Activated CD4-positive, alpha-beta memory T cell treated with anti-CD3 and anti-CD28 coated beads for 36 hours (primary cell): ENCODE measurements at regions of chr14 and their contacts with region 1.

Region 1: DNA sequence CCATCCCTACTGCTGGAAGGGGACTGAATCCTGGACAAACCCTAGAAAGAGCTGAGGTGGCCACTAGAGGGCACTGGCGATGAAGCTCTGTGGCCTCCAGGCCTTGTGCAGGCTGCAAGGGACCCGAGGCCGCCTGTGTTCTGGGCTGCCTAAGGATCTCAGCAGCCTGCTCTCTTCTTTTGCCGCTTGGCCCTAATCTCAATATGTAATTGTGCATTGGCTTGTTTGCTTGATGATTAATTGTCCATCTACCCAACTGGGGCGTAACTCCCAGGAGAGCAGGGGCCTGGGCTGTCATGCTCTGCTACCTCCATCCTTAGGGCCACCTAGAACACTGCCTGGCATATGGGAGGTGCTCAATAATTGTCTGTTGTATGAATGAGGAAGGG is 73.8 kb downstream of the SYNE3 start:
- DNase-seq: peak; percentile 83
- H3K4me3 Mint-ChIP-seq: no peak overlapping the region
- H3K27ac Mint-ChIP-seq: peak overlapping the region; percentile 35
- H3K4me1 Mint-ChIP-seq: peaks cover 10% of the 10 kb centered on the region
- H3K27me3 Mint-ChIP-seq: no peaks in the 10 kb centered on the region

Region 2: DNA sequence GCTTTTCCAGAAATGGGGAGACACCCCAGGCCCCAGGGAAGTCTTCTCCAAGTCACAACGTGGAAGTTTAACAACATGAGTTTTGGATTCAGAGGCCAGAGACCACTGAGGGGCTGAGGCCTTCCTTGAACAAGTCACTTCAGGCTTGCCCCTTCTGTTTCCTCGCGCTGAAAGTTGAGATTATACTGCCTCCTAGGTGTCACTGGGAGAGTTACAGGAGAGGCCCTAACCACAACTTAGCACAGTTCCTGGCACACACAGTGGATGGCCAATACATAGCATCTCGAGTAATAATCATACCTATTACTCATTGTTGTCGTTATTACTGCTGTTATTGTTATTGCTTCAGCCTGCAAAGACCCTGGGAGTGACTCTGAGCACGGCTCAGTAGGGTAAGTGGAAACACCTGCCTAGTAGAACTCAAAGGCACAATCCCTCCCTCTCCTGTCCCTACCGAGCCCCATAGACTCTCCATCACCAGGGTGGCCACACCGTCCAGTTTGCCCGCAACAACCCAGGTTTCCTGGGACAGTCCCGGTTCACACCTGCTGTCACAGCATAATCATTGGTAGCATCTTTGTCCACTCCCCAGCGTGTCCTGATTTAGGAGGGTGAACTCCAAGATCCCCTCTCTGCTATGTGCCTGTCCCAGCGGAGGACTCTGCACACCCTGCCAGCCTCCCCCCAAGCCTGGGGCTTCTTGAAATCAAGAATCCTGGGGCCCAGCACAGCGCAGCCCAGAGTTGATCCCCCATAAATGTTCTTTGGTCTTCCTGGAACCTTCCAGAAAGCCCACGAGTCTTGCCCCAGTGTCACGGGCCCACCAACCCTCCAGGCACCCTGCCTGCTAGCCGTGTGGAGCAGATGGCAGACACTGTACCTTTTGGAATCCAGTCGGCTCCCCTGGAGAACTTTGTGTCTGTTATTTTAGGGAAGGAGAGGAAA is 11.2 kb before region 1 on chr14:
- CTCF ChIA-PET with region 1: interaction called, 20 read pairs
- POLR2A ChIA-PET with region 1: no interaction called
- intact Hi-C with region 1: no loop called
- DNase-seq: peak; percentile 12
- H3K4me3 Mint-ChIP-seq: no peak overlapping the region
- H3K27ac Mint-ChIP-seq: no peak overlapping the region
- H3K4me1 Mint-ChIP-seq: no peaks in the 10 kb centered on the region
- H3K27me3 Mint-ChIP-seq: no peaks in the 10 kb centered on the region

Region 3: DNA sequence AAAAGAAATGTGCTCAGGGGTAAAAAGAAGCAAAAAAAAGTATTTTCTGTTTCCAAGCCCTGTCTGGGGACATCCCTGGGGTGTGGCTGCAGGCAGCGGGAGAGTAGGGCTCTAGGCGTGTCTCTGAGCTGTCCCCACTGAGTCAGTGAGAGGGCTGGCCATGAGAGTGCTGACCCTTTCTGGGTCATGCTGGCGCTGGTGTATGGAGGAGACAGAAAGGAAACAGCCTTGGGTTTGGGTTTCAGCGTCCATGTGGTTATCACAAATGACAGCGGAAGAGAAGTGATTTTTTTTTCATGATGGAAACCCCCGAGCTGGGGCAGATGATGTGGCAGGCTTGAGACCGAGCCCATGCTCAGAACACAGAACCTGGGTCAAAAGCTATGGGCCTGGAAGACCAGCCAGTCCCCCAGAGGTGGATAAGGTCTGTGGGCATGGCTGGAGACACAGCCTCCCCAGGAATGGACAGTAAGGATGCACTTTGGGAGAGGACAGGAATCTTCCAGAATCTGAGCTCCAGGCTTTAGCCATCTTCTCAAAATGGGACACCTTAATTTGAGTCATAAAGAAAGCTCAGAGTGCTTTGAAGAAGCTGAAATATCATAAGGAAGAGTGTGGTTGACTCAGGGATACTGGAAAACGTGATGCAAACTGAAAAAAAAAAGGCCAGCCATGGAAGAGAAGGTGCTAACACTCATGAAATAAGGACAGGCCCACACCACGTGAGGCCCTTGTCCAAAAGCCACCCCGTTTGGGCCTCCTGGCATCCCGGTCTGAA is 37.7 kb after region 1 on chr14:
- CTCF ChIA-PET with region 1: interaction called, 15 read pairs
- POLR2A ChIA-PET with region 1: interaction called, 3 read pairs
- intact Hi-C with region 1: no loop called
- DNase-seq: peak; percentile 74
- H3K4me3 Mint-ChIP-seq: no peak overlapping the region
- H3K27ac Mint-ChIP-seq: peak overlapping the region; percentile 90
- H3K4me1 Mint-ChIP-seq: peaks cover 44% of the 10 kb centered on the region
- H3K27me3 Mint-ChIP-seq: no peaks in the 10 kb centered on the region

Region 4: GRCh38 chr14:95515596-95516552 is 73.2 kb after region 1 on chr14:
- CTCF ChIA-PET with region 1: interaction called, 17 read pairs
- POLR2A ChIA-PET with region 1: interaction called, 8 read pairs
- intact Hi-C with region 1: no loop called
- DNase-seq: peak; percentile 91
- H3K4me3 Mint-ChIP-seq: peak overlapping the region; percentile 90
- H3K27ac Mint-ChIP-seq: peak overlapping the region; percentile 93
- H3K4me1 Mint-ChIP-seq: peaks cover 71% of the 10 kb centered on the region
- H3K27me3 Mint-ChIP-seq: no peaks in the 10 kb centered on the region

Region 5: GRCh38 chr14:95683793-95684192 is 241.2 kb after region 1 on chr14:
- CTCF ChIA-PET with region 1: interaction called, 3 read pairs
- POLR2A ChIA-PET with region 1: no interaction called
- intact Hi-C with region 1: loop called (anchors 10 kb)
- DNase-seq: peak; percentile 45
- H3K4me3 Mint-ChIP-seq: no peak overlapping the region
- H3K27ac Mint-ChIP-seq: no peak overlapping the region
- H3K4me1 Mint-ChIP-seq: no peaks in the 10 kb centered on the region
- H3K27me3 Mint-ChIP-seq: peaks cover 6% of the 10 kb centered on the region